ENCODE measurements at regions of chr7 and their contacts with region 1.

Region 1: GRCh38 chr7:131859147-131859821 is 302.9 kb upstream of the PODXL start:
- DNase-seq: peak; percentile 77 to 87
- ATAC-seq: peak; percentile 86 to 97
- H3K4me3 ChIP-seq: no peak overlapping the region
- H3K27ac ChIP-seq: no peak overlapping the region
- H3K4me1 ChIP-seq: peaks cover 21% of the 10 kb centered on the region
- CTCF ChIP-seq: peak; percentile 84
- EP300 ChIP-seq: no peak
- POLR2A ChIP-seq: no peak
- RAD21 ChIP-seq: peak; percentile 81 to 85

Region 2: DNA sequence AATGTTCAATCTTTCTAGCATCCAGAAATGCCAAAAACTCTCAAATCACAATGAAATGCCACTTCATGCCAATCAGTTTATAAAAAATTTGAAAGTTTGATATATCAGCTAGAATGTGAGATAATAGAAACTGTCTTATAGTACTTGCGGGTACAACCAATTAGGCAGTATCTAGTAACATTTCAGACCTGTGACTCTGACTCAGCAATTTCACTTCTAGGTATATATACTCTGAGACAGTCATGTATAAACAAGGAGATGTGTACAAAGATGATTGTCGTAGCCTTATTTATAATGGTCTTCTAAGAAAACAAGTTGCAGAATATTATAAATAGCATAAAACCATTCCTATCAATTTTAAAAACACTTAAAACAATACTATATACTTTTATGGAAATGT is 50.5 kb before region 1 on chr7:
- CTCF ChIA-PET with region 1: no interaction called
- POLR2A ChIA-PET with region 1: no interaction called
- DNase-seq: no peak
- ATAC-seq: no peak
- H3K4me3 ChIP-seq: no peak overlapping the region
- H3K27ac ChIP-seq: no peak overlapping the region
- H3K4me1 ChIP-seq: no peaks in the 10 kb centered on the region
- CTCF ChIP-seq: no peak
- EP300 ChIP-seq: no peak
- POLR2A ChIP-seq: no peak
- RAD21 ChIP-seq: no peak

Region 3: GRCh38 chr7:131836733-131837132 is 22.6 kb before region 1 on chr7:
- CTCF ChIA-PET with region 1: interaction called, 10 read pairs
- POLR2A ChIA-PET with region 1: no interaction called
- DNase-seq: no peak
- ATAC-seq: peak in 1 of 2 experiments; percentile 54; a peak in 1 of 6 replicates
- H3K4me3 ChIP-seq: no peak overlapping the region
- H3K27ac ChIP-seq: no peak overlapping the region
- H3K4me1 ChIP-seq: no peaks in the 10 kb centered on the region
- CTCF ChIP-seq: no peak
- EP300 ChIP-seq: no peak
- POLR2A ChIP-seq: no peak
- RAD21 ChIP-seq: no peak

Region 4: DNA sequence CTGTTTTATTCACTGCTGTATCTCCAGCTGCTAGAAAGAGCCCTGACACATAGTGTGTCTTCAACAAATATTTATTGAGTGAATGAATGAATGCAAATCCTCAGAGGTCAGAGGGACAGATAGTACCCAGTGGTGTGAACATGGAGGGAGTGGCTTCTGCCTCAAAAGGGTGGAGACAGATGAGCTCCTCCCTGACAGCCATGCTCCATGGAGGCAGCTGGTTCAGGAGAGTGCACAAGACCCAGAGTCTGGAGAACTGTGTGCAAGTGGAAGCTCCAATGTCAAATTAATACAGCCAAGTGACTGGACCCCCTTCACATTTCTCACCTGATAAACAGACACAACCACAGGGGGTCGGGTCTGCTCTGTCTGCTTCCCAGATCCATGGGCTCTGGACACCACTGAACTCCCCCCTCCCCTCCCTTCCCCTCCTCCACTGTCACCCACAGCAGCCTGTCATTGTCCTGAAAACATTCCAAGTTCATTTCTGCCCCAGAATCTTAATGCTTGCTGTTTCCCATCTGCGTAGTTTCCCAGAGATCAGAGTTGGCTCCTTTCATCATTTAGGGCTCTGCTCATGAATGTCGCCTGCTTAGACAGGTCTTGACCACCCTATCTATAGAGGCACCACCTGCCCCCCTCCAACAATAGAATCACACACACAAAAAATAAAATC is 10.0 kb after region 1 on chr7:
- CTCF ChIA-PET with region 1: interaction called, 22 read pairs
- POLR2A ChIA-PET with region 1: no interaction called
- DNase-seq: no peak
- ATAC-seq: no peak
- H3K4me3 ChIP-seq: no peak overlapping the region
- H3K27ac ChIP-seq: no peak overlapping the region
- H3K4me1 ChIP-seq: no peaks in the 10 kb centered on the region
- CTCF ChIP-seq: no peak
- EP300 ChIP-seq: no peak
- POLR2A ChIP-seq: no peak
- RAD21 ChIP-seq: no peak

Region 5: GRCh38 chr7:131897016-131897789 is 37.9 kb after region 1 on chr7:
- CTCF ChIA-PET with region 1: interaction called, 18 read pairs
- POLR2A ChIA-PET with region 1: no interaction called
- DNase-seq: peak; percentile 19 to 63
- ATAC-seq: peak; percentile 67 to 71
- H3K4me3 ChIP-seq: no peak overlapping the region
- H3K27ac ChIP-seq: peak overlapping the region; percentile 66 to 81
- H3K4me1 ChIP-seq: peaks cover 41% of the 10 kb centered on the region
- CTCF ChIP-seq: no peak
- EP300 ChIP-seq: no peak
- POLR2A ChIP-seq: no peak
- RAD21 ChIP-seq: no peak

Region 6: DNA sequence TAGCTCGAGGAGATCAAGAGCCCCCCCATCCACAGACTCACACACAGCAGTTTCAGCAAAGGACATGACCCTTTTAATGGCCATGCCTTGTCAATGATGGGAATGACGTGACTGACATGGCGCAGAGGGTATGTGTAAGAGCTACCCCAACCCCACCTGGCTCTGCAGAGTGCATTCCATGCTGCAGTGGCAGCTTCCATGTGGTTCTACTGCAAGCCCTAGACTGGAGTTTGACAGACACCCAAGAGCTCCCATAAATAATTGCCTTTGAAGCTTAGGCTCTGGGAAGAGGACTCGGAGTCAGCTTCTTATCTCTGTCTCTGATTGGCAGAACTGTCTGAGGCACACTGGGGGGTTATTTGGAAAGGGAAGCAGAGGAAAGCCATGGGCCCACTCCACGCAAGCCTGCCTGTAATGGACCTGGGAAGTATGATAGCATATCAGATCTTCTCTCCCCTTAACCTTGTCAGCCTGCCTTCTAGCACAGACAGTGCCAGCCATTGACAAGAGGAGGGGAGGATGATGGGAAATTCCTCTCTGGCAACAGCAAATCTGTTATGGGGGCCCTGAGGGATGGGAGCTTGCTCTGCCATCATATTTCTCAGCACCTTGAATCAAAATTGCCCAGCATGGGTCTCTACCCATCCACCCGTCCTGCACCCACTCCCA is 175.6 kb after region 1 on chr7:
- CTCF ChIA-PET with region 1: no interaction called
- POLR2A ChIA-PET with region 1: no interaction called
- DNase-seq: no peak
- ATAC-seq: no peak
- H3K4me3 ChIP-seq: no peak overlapping the region
- H3K27ac ChIP-seq: no peak overlapping the region
- H3K4me1 ChIP-seq: peaks cover 11% of the 10 kb centered on the region
- CTCF ChIP-seq: no peak
- EP300 ChIP-seq: no peak
- POLR2A ChIP-seq: no peak
- RAD21 ChIP-seq: no peak

Region 7: GRCh38 chr7:132045002-132045401 is 185.7 kb after region 1 on chr7:
- CTCF ChIA-PET with region 1: interaction called, 10 read pairs
- POLR2A ChIA-PET with region 1: no interaction called
- DNase-seq: no peak
- ATAC-seq: no peak
- H3K4me3 ChIP-seq: no peak overlapping the region
- H3K27ac ChIP-seq: no peak overlapping the region
- H3K4me1 ChIP-seq: no peaks in the 10 kb centered on the region
- CTCF ChIP-seq: no peak
- EP300 ChIP-seq: no peak
- POLR2A ChIP-seq: no peak
- RAD21 ChIP-seq: no peak

Measured in A549 (cell line).